Left ventricle myocardium inferior (tissue), 1 donor: ENCODE measurements at regions of chr3 and their contacts with region 1.

Region 1: GRCh38 chr3:11803977-11804892 is 42.5 kb downstream of the TAMM41 start:
- DNase-seq: no peak
- H3K4me3 ChIP-seq: no peak overlapping the region
- H3K27ac ChIP-seq: no peak overlapping the region
- H3K4me1 ChIP-seq: no peaks in the 10 kb centered on the region
- H3K27me3 ChIP-seq: no peaks in the 10 kb centered on the region
- CTCF ChIP-seq: peak; percentile 84

Region 2: GRCh38 chr3:11379233-11379823 is 424.9 kb before region 1 on chr3:
- intact Hi-C with region 1: loop called (anchors 2 kb)
- DNase-seq: no peak
- H3K4me3 ChIP-seq: no peak overlapping the region
- H3K27ac ChIP-seq: no peak overlapping the region
- H3K4me1 ChIP-seq: peaks cover 8% of the 10 kb centered on the region
- H3K27me3 ChIP-seq: no peaks in the 10 kb centered on the region
- CTCF ChIP-seq: peak; percentile 79